ENCODE measurements at regions of chr12 and their contacts with region 1.

Region 1: DNA sequence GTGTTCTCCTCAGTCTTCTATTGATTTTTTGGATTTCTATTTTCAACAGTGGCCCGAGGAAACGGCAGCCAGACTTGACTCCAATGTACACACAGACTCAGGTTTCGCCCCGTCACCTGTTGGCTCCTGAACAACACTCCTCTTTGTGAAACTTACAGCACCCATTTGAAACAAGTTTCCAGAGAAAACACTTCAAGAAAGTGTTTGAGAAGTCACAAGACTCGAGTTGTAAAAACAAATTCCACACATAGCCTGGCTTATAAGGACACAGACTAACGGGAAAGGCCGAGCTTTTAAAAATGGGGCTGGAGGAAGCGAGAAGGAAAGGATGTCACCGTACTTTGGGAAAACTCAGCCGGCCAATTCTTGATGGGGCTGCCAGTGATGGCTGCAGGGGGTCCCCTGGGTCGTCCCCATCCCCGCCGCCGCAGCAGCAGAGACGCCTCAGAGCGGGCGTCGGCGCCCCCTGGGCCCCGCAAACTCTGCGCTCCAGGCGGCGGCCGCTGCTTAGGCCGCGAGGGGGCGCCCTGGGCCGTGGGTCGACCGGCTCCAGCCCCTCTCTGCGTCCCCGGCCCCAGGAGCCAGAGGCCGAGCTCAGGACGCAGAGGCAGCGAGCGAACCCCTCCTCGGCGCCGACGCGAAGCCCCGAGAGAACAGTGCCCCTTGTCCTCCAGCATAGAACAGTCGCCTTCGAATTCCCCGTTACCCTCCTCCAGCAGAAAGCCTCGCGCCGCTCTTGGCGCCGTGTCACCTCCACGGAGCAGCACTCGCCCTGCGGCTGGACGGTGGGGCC is 106.9 kb downstream of the PRICKLE1 start:
- DNase-seq: peak; percentile 78
- H3K4me3 ChIP-seq: peak overlapping the region; percentile 59 to 69 (median 59)
- H3K27ac ChIP-seq: peak overlapping the region; percentile 96
- H3K4me1 ChIP-seq: peaks cover 54% of the 10 kb centered on the region
- H3K27me3 ChIP-seq: no peaks in the 10 kb centered on the region
- CTCF ChIP-seq: peak; percentile 91 to 93
- POLR2A ChIP-seq: peak; percentile 56

Region 2: GRCh38 chr12:42129595-42130204 is 352.9 kb before region 1 on chr12:
- CTCF ChIA-PET with region 1: no interaction called
- POLR2A ChIA-PET with region 1: no interaction called
- dilution Hi-C with region 1: no loop called
- intact Hi-C with region 1: loop called (anchors 5 kb)
- DNase-seq: peak; percentile 86
- H3K4me3 ChIP-seq: no peak overlapping the region
- H3K27ac ChIP-seq: no peak overlapping the region
- H3K4me1 ChIP-seq: peaks cover 22% of the 10 kb centered on the region
- H3K27me3 ChIP-seq: no peaks in the 10 kb centered on the region
- CTCF ChIP-seq: peak; percentile 54 to 62
- POLR2A ChIP-seq: no peak

Region 3: DNA sequence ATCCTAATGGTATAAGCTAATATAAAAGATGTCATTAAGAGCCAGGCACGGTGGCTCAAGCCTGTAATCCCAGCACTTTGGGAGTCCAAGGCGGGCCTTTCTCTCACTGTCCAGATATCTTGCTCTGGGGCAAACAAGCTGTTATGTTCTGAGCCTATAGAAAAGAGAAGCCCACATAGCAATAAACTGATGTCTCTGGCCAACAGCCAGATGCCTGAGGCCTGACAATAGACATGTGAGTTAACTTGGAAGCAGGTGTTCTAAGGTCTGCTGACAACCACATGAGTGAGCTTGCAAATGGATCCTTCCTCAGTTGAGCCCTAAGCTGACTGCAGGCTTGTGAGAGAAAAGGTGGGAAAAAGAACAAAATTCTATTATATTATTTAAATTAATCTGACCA is 269.6 kb before region 1 on chr12:
- CTCF ChIA-PET with region 1: no interaction called
- POLR2A ChIA-PET with region 1: no interaction called
- dilution Hi-C with region 1: no loop called
- intact Hi-C with region 1: no loop called
- DNase-seq: peak; percentile 61
- H3K4me3 ChIP-seq: no peak overlapping the region
- H3K27ac ChIP-seq: no peak overlapping the region
- H3K4me1 ChIP-seq: no peaks in the 10 kb centered on the region
- H3K27me3 ChIP-seq: no peaks in the 10 kb centered on the region
- CTCF ChIP-seq: no peak
- POLR2A ChIP-seq: no peak

Region 4: GRCh38 chr12:42469355-42470175 is 13.1 kb before region 1 on chr12:
- CTCF ChIA-PET with region 1: interaction called, 11 read pairs
- POLR2A ChIA-PET with region 1: interaction called, 7 read pairs
- dilution Hi-C with region 1: no loop called
- intact Hi-C with region 1: no loop called
- DNase-seq: no peak
- H3K4me3 ChIP-seq: no peak overlapping the region
- H3K27ac ChIP-seq: no peak overlapping the region
- H3K4me1 ChIP-seq: peaks cover 50% of the 10 kb centered on the region
- H3K27me3 ChIP-seq: no peaks in the 10 kb centered on the region
- CTCF ChIP-seq: no peak
- POLR2A ChIP-seq: no peak

Region 5: DNA sequence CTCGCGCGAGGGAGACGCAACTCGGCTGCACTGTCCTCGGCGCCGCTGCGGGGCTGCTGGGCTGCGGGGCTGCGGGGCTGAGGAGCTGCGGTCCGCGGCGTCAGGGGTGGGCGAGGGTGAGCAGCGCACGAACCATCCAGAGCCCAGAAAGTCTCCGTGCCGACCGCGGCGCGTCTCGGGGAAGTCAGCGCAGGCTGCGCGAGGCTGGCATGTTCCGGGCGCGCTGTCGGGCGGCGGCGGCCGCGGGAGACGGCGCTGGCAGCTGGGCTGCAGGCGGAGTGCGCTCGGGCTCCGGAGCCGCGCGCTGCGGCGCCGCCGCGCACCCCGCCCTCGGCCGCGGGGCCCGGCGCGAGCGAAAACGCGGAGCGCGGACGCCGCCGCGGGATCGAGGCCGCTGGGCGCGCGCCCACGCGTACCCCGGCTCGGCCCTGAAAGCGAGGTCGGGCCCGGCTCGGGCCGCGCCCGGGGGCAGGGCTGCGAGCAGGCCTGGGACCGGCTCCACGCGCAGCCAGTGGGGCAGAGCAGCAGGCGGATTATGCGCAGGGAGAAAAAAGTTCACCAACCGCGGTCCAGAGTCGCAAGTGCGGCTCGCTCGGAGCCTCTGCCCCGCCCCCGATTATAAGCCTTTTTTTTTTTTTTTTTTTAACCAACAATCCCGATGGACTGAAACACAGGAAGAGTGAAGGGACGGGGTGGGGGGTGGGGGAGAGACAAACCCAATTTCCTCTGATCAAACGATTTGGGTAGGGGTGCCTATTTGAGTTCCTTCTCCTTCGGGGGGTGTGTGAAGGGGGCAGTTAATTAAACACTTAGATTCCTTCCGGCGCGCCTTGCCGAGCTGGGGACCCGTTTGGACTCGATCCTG is 107.1 kb after region 1 on chr12 and contains the start of gene PRICKLE1:
- CTCF ChIA-PET with region 1: interaction called, 17 read pairs
- POLR2A ChIA-PET with region 1: interaction called, 7 read pairs
- dilution Hi-C with region 1: no loop called
- intact Hi-C with region 1: loop called (anchors 1 kb)
- DNase-seq: peak; percentile 69
- H3K4me3 ChIP-seq: peak within 1 kb of the TSS; percentile 81 to 99 (median 86)
- H3K27ac ChIP-seq: peak within 1 kb of the TSS; percentile 59
- H3K4me1 ChIP-seq: peaks cover 38% of the 10 kb centered on the region
- H3K27me3 ChIP-seq: no peaks in the 10 kb centered on the region
- CTCF ChIP-seq: no peak
- POLR2A ChIP-seq: peak; percentile 68
- total RNA-seq, gene PRICKLE1: 69.0 and 86.0 TPM in 2 replicates

Region 6: GRCh38 chr12:42679466-42679865 is 196.8 kb after region 1 on chr12:
- CTCF ChIA-PET with region 1: no interaction called
- POLR2A ChIA-PET with region 1: no interaction called
- dilution Hi-C with region 1: no loop called
- intact Hi-C with region 1: no loop called
- DNase-seq: no peak
- H3K4me3 ChIP-seq: no peak overlapping the region
- H3K27ac ChIP-seq: no peak overlapping the region
- H3K4me1 ChIP-seq: no peaks in the 10 kb centered on the region
- H3K27me3 ChIP-seq: no peaks in the 10 kb centered on the region
- CTCF ChIP-seq: no peak
- POLR2A ChIP-seq: no peak

Region 7: GRCh38 chr12:42961395-42961794 is 478.8 kb after region 1 on chr12:
- CTCF ChIA-PET with region 1: interaction called, 9 read pairs
- POLR2A ChIA-PET with region 1: interaction called, 4 read pairs
- dilution Hi-C with region 1: no loop called
- intact Hi-C with region 1: loop called (anchors 1 kb)
- DNase-seq: peak; percentile 89
- H3K4me3 ChIP-seq: no peak overlapping the region
- H3K27ac ChIP-seq: peak overlapping the region; percentile 81
- H3K4me1 ChIP-seq: peaks cover 72% of the 10 kb centered on the region
- H3K27me3 ChIP-seq: no peaks in the 10 kb centered on the region
- CTCF ChIP-seq: no peak
- POLR2A ChIP-seq: peak; percentile 81

Region 8: DNA sequence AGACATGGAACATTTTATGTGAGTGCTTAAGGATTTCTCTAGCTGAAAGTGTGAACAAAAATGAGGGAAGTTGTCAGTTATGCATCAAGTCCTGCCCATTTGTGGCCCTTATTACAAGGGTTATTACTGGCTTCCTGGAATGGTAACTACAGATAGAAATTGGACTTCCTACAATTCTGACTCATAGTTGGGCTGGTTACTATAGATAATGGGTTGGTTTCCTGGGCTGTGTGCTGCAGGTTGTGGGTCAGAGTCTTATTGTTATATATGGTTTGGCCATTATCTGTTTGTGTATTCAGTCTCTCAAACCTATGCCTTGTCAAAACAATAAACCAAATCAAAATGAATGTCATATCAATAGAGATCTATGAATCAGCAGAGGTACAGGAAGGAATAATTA is 755.6 kb after region 1 on chr12:
- CTCF ChIA-PET with region 1: interaction called, 10 read pairs
- POLR2A ChIA-PET with region 1: no interaction called
- dilution Hi-C with region 1: no loop called
- intact Hi-C with region 1: loop called (anchors 1 kb)
- DNase-seq: peak; percentile 99
- H3K4me3 ChIP-seq: no peak overlapping the region
- H3K27ac ChIP-seq: peak overlapping the region; percentile 95
- H3K4me1 ChIP-seq: peaks cover 54% of the 10 kb centered on the region
- H3K27me3 ChIP-seq: no peaks in the 10 kb centered on the region
- CTCF ChIP-seq: no peak
- POLR2A ChIP-seq: peak; percentile 94

Region 9: DNA sequence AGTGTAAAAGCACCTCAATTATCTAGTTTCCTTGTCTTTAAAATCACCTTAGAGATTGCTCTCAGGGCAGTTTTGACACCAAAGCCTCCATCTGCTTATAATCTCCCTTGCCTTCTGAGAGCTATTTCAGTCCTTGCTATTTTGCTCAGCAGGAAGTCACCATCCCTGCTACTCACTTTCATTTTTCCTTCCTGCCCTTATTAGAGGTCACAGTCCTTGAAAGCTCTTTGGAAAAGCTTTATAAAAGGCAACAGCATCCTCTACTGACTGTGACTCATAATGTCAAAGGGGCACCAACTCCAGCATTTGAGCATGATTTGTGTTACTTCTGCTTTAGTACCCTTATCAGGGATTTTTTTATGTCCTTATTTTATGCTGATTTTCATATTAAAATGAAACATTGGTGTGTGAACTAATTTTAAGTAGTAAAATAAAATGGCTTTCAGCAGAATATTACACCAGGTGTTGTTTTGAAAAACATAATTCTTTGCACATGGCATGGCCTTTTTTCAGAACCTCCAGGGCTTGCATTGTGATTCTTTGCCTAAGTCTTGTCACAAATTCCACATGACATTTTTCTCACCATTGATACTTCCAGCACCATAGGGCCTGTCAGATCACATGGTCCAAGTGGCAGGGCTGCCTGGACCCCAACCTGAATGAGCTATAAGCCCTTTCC is 856.3 kb after region 1 on chr12:
- CTCF ChIA-PET with region 1: interaction called, 62 read pairs
- POLR2A ChIA-PET with region 1: interaction called, 5 read pairs
- dilution Hi-C with region 1: no loop called
- intact Hi-C with region 1: loop called (anchors 1 kb)
- DNase-seq: peak; percentile 86
- H3K4me3 ChIP-seq: no peak overlapping the region
- H3K27ac ChIP-seq: peak overlapping the region; percentile 11
- H3K4me1 ChIP-seq: peaks cover 24% of the 10 kb centered on the region
- H3K27me3 ChIP-seq: no peaks in the 10 kb centered on the region
- CTCF ChIP-seq: peak; percentile 40 to 68
- POLR2A ChIP-seq: no peak